ENCODE measurements at regions of chr13 and their contacts with region 1.

Region 1: GRCh38 chr13:30802953-30803478 is 67.7 kb downstream of the ALOX5AP start:
- DNase-seq: peak; percentile 93

Region 2: DNA sequence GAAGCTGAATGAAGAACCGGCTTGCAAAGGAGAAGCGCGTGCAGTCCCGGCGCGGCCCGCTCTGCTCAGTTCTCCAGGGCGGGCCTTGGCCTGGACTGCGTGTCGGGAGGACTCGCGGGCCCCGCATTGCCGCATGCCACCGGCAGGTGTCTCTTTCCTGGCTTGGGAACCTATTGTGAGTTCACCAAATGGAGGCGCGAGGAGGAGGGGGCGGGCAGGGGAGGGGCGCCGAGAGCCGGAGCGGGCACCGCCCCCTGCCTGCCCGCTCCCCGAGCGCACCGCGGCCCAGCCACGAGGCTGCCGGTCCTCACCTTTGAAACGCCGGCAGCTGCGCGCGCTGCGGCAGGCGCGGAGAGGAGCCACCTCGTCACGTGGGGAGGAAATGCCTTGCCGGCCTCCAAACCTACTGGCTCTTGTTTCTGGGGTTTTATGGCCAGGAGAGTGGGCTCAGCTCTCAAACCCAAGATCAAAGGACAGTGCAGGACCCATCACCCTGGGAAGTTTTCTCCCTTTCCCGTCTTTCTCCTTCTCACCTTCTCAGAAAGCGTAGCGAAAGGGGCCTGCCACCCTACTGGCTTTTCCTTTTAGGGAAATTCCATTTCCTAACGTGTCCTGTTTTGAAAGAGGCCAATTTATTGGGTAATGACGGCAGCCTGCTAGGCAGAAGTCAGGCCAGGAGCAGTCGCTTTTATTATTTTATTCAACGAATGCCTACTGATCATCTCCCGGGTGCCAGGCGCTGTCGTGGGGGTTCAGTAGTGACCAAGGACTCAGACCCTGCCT is 394.5 kb before region 1 on chr13:
- intact Hi-C with region 1: loop called (anchors 10 kb)
- DNase-seq: peak; percentile 97

Region 3: GRCh38 chr13:30617315-30618185 is 185.5 kb before region 1 on chr13 and contains the start of gene USPL1:
- intact Hi-C with region 1: loop called (anchors 5 kb)
- DNase-seq: peak; percentile 99
- total RNA-seq, gene USPL1: 9.8 TPM

Region 4: GRCh38 chr13:30763786-30764413 is 39.1 kb before region 1 on chr13:
- intact Hi-C with region 1: no loop called
- DNase-seq: no peak

Region 5: GRCh38 chr13:30865123-30866049 is 62.4 kb after region 1 on chr13:
- intact Hi-C with region 1: loop called (anchors 5 kb)
- DNase-seq: peak; percentile 86

Region 6: DNA sequence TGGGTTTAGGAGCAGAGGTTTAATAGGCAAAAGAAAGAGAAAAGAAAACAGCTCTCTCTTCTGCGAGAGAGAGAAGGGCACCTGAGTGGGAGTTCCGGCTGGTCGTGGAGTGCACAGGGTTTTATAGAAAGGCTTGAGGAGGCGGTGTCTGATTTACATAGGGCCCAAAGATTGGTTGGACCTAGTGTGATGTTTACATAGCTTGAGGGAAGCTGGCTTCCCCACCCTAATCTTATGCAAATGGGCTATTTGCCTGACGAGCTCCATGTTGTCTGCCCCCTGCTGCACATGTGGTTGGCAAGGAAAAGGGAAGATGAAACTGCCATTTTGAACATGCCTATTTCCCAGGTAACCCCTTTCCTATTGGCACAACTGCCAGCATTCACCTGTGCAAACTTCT is 81.5 kb after region 1 on chr13:
- intact Hi-C with region 1: no loop called
- DNase-seq: no peak

Region 7: GRCh38 chr13:31044377-31045285 is 241.6 kb after region 1 on chr13:
- intact Hi-C with region 1: loop called (anchors 10 kb)
- DNase-seq: peak; percentile 88

Measured in cardiac septum (tissue), 1 donor.